ENCODE measurements at regions of chr7 and their contacts with region 1.

Region 1: DNA sequence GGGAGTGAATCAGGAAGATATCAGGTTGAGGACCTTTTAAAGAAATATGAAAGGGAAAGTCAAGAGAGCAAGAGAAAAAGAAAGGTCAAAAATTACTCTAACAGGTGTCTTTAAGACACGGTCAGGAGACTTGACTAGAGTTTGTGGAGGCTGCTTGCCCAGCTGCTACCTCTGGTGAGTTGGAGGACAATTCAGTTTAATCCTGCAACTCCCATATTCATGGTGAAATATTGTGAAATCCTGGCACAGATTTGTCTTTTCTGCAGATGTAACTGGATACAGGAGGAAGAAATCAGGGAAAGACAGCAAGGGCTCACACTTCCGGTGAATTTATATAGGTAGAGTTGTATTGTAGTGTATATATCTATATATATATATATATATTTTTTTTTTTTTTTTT is 93.5 kb downstream of the AKAP9 start:
- DNase-seq: no peak
- ATAC-seq: no peak
- H3K4me3 ChIP-seq: no peak overlapping the region
- H3K4me3 Mint-ChIP-seq: no peak overlapping the region
- H3K27ac ChIP-seq: no peak overlapping the region
- H3K27ac Mint-ChIP-seq: peak overlapping the region in 3 of 9 donors; percentile 4 to 25 (median 7)
- H3K4me1 ChIP-seq: no peaks in the 10 kb centered on the region
- H3K4me1 Mint-ChIP-seq: peaks cover 0 to 10% (median 0%) of the 10 kb centered on the region in 7 donors
- H3K27me3 ChIP-seq: no peaks in the 10 kb centered on the region
- H3K27me3 Mint-ChIP-seq: no peaks in the 10 kb centered on the region

Region 2: GRCh38 chr7:91771921-91772815 is 261.9 kb before region 1 on chr7:
- CTCF ChIA-PET with region 1: no interaction called
- POLR2A ChIA-PET with region 1: no interaction called
- intact Hi-C with region 1: no loop called
- DNase-seq: no peak
- ATAC-seq: no peak
- H3K4me3 ChIP-seq: no peak overlapping the region
- H3K4me3 Mint-ChIP-seq: no peak overlapping the region
- H3K27ac ChIP-seq: no peak overlapping the region
- H3K27ac Mint-ChIP-seq: no peak overlapping the region
- H3K4me1 ChIP-seq: no peaks in the 10 kb centered on the region
- H3K4me1 Mint-ChIP-seq: no peaks in the 10 kb centered on the region
- H3K27me3 ChIP-seq: no peaks in the 10 kb centered on the region
- H3K27me3 Mint-ChIP-seq: peaks cover 0 to 5% (median 0%) of the 10 kb centered on the region in 5 donors

Region 3: GRCh38 chr7:91995391-91996105 is 38.6 kb before region 1 on chr7:
- CTCF ChIA-PET with region 1: no interaction called
- POLR2A ChIA-PET with region 1: no interaction called
- intact Hi-C with region 1: loop called in 1 of 2 experiments (anchors 5 kb)
- DNase-seq: no peak
- ATAC-seq: no peak
- H3K4me3 ChIP-seq: no peak overlapping the region
- H3K4me3 Mint-ChIP-seq: no peak overlapping the region
- H3K27ac ChIP-seq: no peak overlapping the region
- H3K27ac Mint-ChIP-seq: no peak overlapping the region
- H3K4me1 ChIP-seq: no peaks in the 10 kb centered on the region
- H3K4me1 Mint-ChIP-seq: peaks cover 0 to 13% (median 0%) of the 10 kb centered on the region in 7 donors
- H3K27me3 ChIP-seq: no peaks in the 10 kb centered on the region
- H3K27me3 Mint-ChIP-seq: no peaks in the 10 kb centered on the region